Activated naive CD4-positive, alpha-beta T cell treated with anti-CD3 and anti-CD28 coated beads, Interleukin-2, amount 10 ng/mL, durations not matched to agents 7 days and 5 days (primary cell): ENCODE measurements at regions of chr17 and their contacts with region 1.

Region 1: GRCh38 chr17:38667099-38667786 is 7.5 kb downstream of the EPOP start:
- DNase-seq: peak; percentile 70
- H3K4me3 Mint-ChIP-seq: no peak overlapping the region
- H3K27ac Mint-ChIP-seq: no peak overlapping the region
- H3K4me1 Mint-ChIP-seq: peaks cover 15% of the 10 kb centered on the region
- H3K27me3 Mint-ChIP-seq: peaks cover 88% of the 10 kb centered on the region

Region 2: GRCh38 chr17:38498186-38498752 is 169.0 kb before region 1 on chr17:
- CTCF ChIA-PET with region 1: interaction called, 10 read pairs
- DNase-seq: no peak
- H3K4me3 Mint-ChIP-seq: no peak overlapping the region
- H3K27ac Mint-ChIP-seq: no peak overlapping the region
- H3K4me1 Mint-ChIP-seq: no peaks in the 10 kb centered on the region
- H3K27me3 Mint-ChIP-seq: peaks cover 16% of the 10 kb centered on the region

Region 3: GRCh38 chr17:38584350-38584925 is 82.8 kb before region 1 on chr17:
- CTCF ChIA-PET with region 1: interaction called, 19 read pairs
- DNase-seq: peak; percentile 63
- H3K4me3 Mint-ChIP-seq: no peak overlapping the region
- H3K27ac Mint-ChIP-seq: no peak overlapping the region
- H3K4me1 Mint-ChIP-seq: peaks cover 16% of the 10 kb centered on the region
- H3K27me3 Mint-ChIP-seq: peaks cover 92% of the 10 kb centered on the region

Region 4: DNA sequence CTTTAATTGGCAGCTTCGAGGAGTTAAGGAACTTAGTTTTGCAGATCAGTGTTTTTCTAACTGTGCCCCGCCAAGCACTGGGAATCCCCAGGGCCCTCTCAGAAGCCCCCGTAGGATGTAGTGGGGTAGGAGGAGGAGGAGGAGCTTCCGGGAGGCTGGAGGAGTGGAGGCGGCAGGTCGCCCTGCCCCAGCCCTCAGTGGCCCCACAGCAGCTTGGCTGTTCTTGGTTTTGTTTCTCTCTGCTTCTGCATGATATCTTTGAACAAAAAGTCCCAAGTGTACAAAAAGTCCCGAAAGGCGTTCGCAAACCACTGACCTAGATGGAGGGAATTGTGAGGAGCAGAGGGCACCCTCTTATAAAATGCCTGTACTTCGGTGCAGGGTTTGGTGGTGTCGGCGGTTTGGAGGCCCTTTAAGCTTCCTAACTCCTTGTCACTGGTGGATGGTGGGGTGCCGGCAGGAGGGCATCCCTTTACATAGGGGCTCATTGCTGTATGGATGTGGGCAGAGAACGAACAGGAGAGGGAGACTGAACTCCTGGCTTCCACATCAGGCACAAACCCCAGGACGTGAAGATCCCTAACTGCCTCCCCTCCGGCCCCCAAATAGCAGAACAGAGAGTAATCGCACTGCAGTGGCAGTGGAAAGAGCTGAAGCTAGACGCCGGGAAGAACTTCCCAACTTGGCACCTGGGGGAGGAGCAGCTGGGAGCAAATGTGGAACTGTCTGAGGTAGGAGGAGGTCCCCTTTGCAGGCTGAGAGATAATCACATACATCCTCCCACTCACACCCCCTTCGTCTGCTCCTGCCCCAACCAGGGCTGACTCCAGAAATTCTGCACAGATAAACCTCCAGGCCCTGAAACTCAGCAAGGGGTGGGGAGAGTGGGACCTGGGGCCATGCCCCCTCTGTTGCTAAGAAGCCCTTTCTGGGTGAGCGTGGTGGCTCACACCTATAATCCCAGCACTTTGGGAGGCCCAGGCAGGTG is 12.5 kb before region 1 on chr17:
- CTCF ChIA-PET with region 1: interaction called, 16 read pairs
- DNase-seq: no peak
- H3K4me3 Mint-ChIP-seq: no peak overlapping the region
- H3K27ac Mint-ChIP-seq: no peak overlapping the region
- H3K4me1 Mint-ChIP-seq: peaks cover 6% of the 10 kb centered on the region
- H3K27me3 Mint-ChIP-seq: peaks cover 67% of the 10 kb centered on the region

Region 5: GRCh38 chr17:38735161-38735997 is 68.1 kb after region 1 on chr17:
- CTCF ChIA-PET with region 1: interaction called, 13 read pairs
- DNase-seq: peak; percentile 82
- H3K4me3 Mint-ChIP-seq: no peak overlapping the region
- H3K27ac Mint-ChIP-seq: peak overlapping the region; percentile 42
- H3K4me1 Mint-ChIP-seq: peaks cover 47% of the 10 kb centered on the region
- H3K27me3 Mint-ChIP-seq: peaks cover 23% of the 10 kb centered on the region